Activated T-helper 1 cell treated with anti-CD3 and anti-CD28 coated beads, Interleukin-12 subunit alpha, Interleukin-12 subunit beta, Interleukin-2, Interleukin-4 antibody, amounts not matched to agents 30 ng/mL and 10 ng/mL and 1 ng/mL, durations not matched to agents 14 hours and 24 hours and 36 hours (primary cell): ENCODE measurements at regions of chr1 and their contacts with region 1.

Region 1: DNA sequence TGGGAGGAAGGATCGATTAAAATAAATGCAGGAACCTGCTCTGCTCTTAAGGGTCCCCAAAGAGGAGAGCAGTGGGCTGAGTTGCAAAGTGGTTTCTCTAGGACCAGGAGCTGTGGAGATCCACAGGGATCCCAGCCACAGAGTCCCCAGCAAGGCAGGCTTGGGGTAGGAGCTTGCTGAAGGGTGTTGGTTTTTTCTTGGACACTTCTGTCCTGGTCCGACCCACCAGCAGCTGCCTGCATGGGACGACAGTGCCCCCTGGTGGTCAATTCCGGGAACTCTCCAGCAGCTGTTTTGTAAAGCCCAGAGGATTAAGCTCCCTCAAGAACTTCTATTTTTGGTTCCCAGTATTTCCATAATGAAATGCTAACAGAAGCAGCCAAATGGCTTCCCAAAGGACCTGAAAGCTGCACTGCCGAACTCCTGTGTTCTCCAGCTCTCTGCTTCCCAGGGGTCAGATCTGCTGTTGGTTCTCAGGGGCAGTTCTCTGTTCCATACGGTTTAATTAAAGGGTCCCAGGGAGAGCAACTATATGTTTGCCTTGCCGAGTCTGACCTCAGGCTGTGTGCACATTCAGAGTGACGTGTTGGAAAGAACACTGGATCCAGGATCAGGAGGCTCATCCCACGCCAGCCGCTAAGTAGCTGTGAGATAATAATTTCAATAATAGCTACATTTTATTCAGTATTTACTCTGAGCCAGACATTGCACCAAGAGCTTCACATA is 23.2 kb downstream of the NENF start:
- DNase-seq: peak; percentile 73
- H3K4me3 Mint-ChIP-seq: no peak overlapping the region
- H3K27ac Mint-ChIP-seq: no peak overlapping the region
- H3K4me1 Mint-ChIP-seq: peaks cover 12% of the 10 kb centered on the region
- H3K27me3 Mint-ChIP-seq: peaks cover 1% of the 10 kb centered on the region

Region 2: DNA sequence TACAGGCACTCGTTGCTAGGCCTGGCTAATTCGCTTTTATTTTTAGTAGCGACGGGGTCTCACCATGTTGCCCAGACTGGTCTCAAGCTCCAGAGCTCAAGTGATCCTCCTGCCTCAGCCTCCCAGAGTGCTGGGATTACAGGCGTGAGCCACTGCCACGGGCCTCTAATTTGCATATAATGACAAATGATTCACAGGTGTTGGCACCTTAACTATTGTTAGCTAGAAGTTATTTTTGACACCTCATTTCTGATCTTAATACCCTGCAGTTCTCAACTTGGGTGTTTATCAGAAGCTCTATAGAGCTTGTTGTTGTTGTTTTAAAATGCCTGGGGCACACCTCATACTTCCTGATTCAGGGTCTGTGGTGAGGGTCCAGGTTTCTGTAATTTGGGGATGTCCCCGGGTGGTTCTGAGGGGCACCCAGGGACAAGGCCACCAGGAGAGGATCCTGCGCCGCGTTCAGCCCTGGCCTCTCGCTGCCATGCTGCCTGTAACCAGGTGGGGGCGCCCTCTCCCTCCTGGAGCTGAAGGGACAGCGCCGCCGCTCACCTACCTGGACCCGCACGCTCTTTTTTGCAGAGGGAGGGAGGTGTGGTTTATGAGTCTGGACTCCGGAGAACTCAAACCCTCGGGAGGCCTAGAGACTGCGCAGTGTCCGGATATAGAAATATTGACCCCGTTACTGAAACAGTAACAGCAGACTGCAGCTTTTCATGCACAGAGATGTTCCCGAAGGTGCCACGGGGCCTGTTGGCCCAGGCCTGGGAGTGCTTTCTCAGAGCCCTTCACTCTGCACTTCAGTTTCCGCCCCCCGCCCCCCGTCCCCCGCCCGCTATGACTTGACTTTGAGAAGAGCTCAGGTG is 757.6 kb before region 1 on chr1:
- intact Hi-C with region 1: loop called (anchors 5 kb)
- DNase-seq: peak; percentile 75
- H3K4me3 Mint-ChIP-seq: peak overlapping the region; percentile 41
- H3K27ac Mint-ChIP-seq: no peak overlapping the region
- H3K4me1 Mint-ChIP-seq: peaks cover 36% of the 10 kb centered on the region
- H3K27me3 Mint-ChIP-seq: peaks cover 15% of the 10 kb centered on the region

Region 3: DNA sequence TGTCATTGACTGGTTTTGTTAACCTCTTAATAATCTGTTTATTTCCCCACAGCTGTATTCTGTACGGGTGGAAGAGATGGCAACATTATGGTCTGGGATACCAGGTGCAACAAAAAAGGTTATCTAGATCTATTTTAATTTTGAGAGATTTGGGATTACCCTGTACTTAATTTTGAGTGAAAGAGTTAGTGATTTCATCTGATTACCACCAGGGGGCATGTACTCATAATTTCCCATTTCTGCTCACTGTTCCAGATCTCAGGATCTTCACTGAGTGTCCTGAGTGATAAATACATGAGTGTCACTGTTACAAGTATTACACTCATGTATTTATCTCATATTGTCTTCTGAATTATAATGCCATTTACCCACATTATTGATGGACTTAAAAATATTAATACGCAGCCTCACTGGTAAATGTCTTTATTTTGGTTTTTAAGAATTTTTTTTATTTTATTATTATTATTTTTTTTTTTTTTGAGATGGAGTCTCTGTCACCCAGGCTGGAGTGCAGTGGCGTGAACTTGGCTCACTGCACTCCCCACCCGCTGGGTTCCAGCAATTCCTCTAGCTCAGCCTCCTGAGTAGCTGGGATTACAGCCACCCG is 393.0 kb before region 1 on chr1:
- intact Hi-C with region 1: loop called (anchors 2 kb)
- DNase-seq: no peak
- H3K4me3 Mint-ChIP-seq: no peak overlapping the region
- H3K27ac Mint-ChIP-seq: no peak overlapping the region
- H3K4me1 Mint-ChIP-seq: no peaks in the 10 kb centered on the region
- H3K27me3 Mint-ChIP-seq: no peaks in the 10 kb centered on the region

Region 4: GRCh38 chr1:212234431-212235395 is 221.3 kb before region 1 on chr1:
- intact Hi-C with region 1: no loop called
- DNase-seq: no peak
- H3K4me3 Mint-ChIP-seq: peak overlapping the region; percentile 57
- H3K27ac Mint-ChIP-seq: peak overlapping the region; percentile 67
- H3K4me1 Mint-ChIP-seq: peaks cover 72% of the 10 kb centered on the region
- H3K27me3 Mint-ChIP-seq: no peaks in the 10 kb centered on the region

Region 5: GRCh38 chr1:212302745-212303383 is 153.1 kb before region 1 on chr1:
- intact Hi-C with region 1: no loop called
- DNase-seq: no peak
- H3K4me3 Mint-ChIP-seq: no peak overlapping the region
- H3K27ac Mint-ChIP-seq: peak overlapping the region; percentile 42
- H3K4me1 Mint-ChIP-seq: peaks cover 29% of the 10 kb centered on the region
- H3K27me3 Mint-ChIP-seq: no peaks in the 10 kb centered on the region

Region 6: DNA sequence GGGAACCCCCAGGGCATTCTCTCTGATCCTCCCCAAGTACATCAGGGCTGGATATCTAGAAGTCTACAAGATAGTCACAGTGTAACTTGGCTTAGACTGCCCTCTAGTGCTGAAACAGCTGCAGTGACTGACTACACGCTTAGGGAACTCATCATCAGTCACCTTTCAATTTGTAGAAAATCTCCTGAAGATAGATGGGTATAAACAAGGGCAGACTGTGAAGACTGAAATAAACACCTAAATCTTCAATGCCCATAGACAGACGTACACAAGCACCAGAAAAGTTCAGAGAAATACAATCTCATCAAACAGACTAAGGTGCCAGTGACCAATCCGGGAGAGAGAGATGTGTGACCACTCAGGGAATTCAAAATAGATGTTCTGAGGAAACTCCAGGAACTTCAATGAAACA is 87.9 kb before region 1 on chr1:
- intact Hi-C with region 1: loop called (anchors 1 kb)
- DNase-seq: peak; percentile 48
- H3K4me3 Mint-ChIP-seq: no peak overlapping the region
- H3K27ac Mint-ChIP-seq: no peak overlapping the region
- H3K4me1 Mint-ChIP-seq: no peaks in the 10 kb centered on the region
- H3K27me3 Mint-ChIP-seq: no peaks in the 10 kb centered on the region

Region 7: GRCh38 chr1:212432706-212433576 is 23.0 kb before region 1 on chr1 and contains the start of gene NENF:
- intact Hi-C with region 1: loop called (anchors 1 kb)
- DNase-seq: peak; percentile 74
- H3K4me3 Mint-ChIP-seq: peak within 1 kb of the TSS; percentile 77
- H3K27ac Mint-ChIP-seq: peak within 1 kb of the TSS; percentile 53
- H3K4me1 Mint-ChIP-seq: peaks cover 32% of the 10 kb centered on the region
- H3K27me3 Mint-ChIP-seq: peaks cover 6% of the 10 kb centered on the region
- total RNA-seq, gene NENF: 29.7 and 32.5 TPM in 2 replicates

Region 8: GRCh38 chr1:212990276-212990675 is 534.3 kb after region 1 on chr1:
- intact Hi-C with region 1: loop called (anchors 1 kb)
- DNase-seq: no peak
- H3K4me3 Mint-ChIP-seq: no peak overlapping the region
- H3K27ac Mint-ChIP-seq: no peak overlapping the region
- H3K4me1 Mint-ChIP-seq: peaks cover under 1% of the 10 kb centered on the region
- H3K27me3 Mint-ChIP-seq: no peaks in the 10 kb centered on the region